MCF 10A (cell line): ENCODE measurements at regions of chr18 and their contacts with region 1.

Region 1: GRCh38 chr18:35143622-35144596 is 96.9 kb upstream of the ZNF397 start:
- DNase-seq: peak; percentile 65
- H3K4me3 Mint-ChIP-seq: no peak overlapping the region
- H3K27ac Mint-ChIP-seq: no peak overlapping the region
- H3K4me1 Mint-ChIP-seq: no peaks in the 10 kb centered on the region
- H3K27me3 Mint-ChIP-seq: no peaks in the 10 kb centered on the region
- CTCF ChIP-seq: peak; percentile 73

Region 2: GRCh38 chr18:34880882-34881834 is 262.8 kb before region 1 on chr18:
- CTCF ChIA-PET with region 1: interaction called, 15 read pairs
- POLR2A ChIA-PET with region 1: no interaction called
- intact Hi-C with region 1: loop called (anchors 5 kb)
- DNase-seq: peak; percentile 18
- H3K4me3 Mint-ChIP-seq: no peak overlapping the region
- H3K27ac Mint-ChIP-seq: no peak overlapping the region
- H3K4me1 Mint-ChIP-seq: no peaks in the 10 kb centered on the region
- H3K27me3 Mint-ChIP-seq: peaks cover 4% of the 10 kb centered on the region
- CTCF ChIP-seq: peak; percentile 17

Region 3: DNA sequence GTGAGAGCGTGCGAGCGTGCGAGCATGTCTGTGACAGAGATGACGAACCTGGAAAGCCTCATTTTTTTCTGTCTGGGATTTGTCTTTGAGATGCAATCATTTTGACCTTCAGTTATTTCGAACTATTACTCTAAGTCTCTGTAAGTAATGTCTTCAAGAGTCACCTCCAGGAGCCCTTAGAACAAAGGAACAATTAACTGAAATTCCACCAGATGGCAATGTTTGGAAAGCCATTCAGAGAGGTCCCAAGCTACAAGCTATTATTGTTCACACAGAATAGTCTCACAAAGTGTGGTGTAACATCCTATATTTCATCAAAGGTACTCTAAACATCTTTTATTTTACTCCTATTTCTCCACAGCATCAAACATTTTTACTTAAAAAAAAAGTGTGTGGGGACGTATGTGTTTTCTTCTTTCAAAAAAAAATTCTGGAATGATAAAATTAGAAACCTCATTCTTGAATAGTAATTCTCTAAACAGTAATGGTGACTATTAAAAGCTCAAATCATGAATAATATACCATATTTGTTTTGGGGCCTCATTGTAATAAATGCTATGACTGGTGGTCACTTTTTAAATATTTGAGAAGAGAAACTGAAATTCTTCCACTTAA is 137.8 kb before region 1 on chr18:
- CTCF ChIA-PET with region 1: interaction called, 90 read pairs
- POLR2A ChIA-PET with region 1: interaction called, 4 read pairs
- intact Hi-C with region 1: loop called (anchors 1 kb)
- DNase-seq: peak; percentile 71
- H3K4me3 Mint-ChIP-seq: no peak overlapping the region
- H3K27ac Mint-ChIP-seq: no peak overlapping the region
- H3K4me1 Mint-ChIP-seq: no peaks in the 10 kb centered on the region
- H3K27me3 Mint-ChIP-seq: peaks cover 20% of the 10 kb centered on the region
- CTCF ChIP-seq: peak; percentile 35

Region 4: GRCh38 chr18:35050028-35050546 is 93.8 kb before region 1 on chr18:
- CTCF ChIA-PET with region 1: interaction called, 11 read pairs
- POLR2A ChIA-PET with region 1: no interaction called
- intact Hi-C with region 1: no loop called
- DNase-seq: no peak
- H3K4me3 Mint-ChIP-seq: no peak overlapping the region
- H3K27ac Mint-ChIP-seq: peak overlapping the region; percentile 66
- H3K4me1 Mint-ChIP-seq: peaks cover 15% of the 10 kb centered on the region
- H3K27me3 Mint-ChIP-seq: no peaks in the 10 kb centered on the region
- CTCF ChIP-seq: no peak

Region 5: DNA sequence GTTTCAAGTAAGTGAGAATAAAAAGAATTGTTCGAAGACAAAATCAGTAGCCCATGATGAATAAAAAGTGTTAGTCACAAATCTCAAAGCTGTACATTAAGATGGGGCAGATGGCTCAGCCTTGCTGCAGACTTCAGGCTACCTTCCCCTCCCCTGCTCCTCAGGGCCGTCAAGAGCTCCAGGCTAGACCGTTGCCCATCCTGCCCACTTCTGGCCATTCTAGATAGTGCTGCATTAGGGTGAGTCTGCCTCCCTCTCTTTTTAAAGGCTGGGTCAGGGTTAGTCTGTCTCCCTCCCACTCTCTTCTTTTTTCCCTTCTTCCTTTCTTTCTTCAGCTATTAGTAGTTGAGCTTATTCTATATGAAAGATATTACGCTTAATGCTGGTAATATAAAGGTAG is 16.7 kb before region 1 on chr18:
- CTCF ChIA-PET with region 1: interaction called, 18 read pairs
- POLR2A ChIA-PET with region 1: interaction called, 3 read pairs
- intact Hi-C with region 1: no loop called
- DNase-seq: peak; percentile 8
- H3K4me3 Mint-ChIP-seq: no peak overlapping the region
- H3K27ac Mint-ChIP-seq: no peak overlapping the region
- H3K4me1 Mint-ChIP-seq: peaks cover 7% of the 10 kb centered on the region
- H3K27me3 Mint-ChIP-seq: no peaks in the 10 kb centered on the region
- CTCF ChIP-seq: no peak